Lower leg skin (tissue), 4 donors: ENCODE measurements at regions of chr1 and their contacts with region 1.

Region 1: DNA sequence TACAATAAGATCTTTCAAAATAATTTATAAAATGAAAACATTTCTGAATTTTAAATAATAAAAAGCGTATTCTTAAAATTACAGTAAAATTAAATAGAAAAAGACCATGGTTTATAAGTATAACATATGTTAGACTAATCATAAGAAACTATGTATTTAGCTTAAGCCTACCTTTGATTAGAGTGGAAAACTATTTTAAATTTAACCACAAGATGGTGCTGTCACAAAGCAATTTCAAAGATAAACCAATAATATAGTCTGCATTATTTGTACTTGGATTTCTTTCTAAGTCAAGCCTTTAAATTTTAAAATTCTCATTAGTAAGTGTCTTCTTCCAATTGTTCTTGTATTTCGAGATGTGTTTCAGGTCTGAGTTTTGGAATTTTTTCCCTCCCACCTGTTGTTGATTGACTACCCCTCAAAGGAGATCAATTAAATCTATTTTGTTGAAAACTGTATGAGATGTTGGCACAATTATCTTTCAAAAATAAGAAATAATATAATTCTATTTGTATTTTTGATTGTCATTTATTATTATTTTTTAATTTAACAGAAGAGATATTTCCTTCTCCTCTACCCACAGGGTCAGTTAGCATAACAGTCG is 459.8 kb downstream of the KCNT2 start:
- DNase-seq: no peak
- H3K4me3 ChIP-seq: no peak overlapping the region
- CTCF ChIP-seq: no peak
- POLR2A ChIP-seq: no peak

Region 2: GRCh38 chr1:196651637-196652215 is 503.3 kb after region 1 on chr1 and contains the start of gene CFH:
- intact Hi-C with region 1: loop called (anchors 10 kb)
- DNase-seq: no peak
- H3K4me3 ChIP-seq: no peak within 1 kb of the TSS
- CTCF ChIP-seq: no peak
- POLR2A ChIP-seq: no peak
- total RNA-seq, gene CFH: 40.8 to 115 (median 56.6) TPM